PC-3 (cell line): ENCODE measurements at regions of chr4 and their contacts with region 1.

Region 1: DNA sequence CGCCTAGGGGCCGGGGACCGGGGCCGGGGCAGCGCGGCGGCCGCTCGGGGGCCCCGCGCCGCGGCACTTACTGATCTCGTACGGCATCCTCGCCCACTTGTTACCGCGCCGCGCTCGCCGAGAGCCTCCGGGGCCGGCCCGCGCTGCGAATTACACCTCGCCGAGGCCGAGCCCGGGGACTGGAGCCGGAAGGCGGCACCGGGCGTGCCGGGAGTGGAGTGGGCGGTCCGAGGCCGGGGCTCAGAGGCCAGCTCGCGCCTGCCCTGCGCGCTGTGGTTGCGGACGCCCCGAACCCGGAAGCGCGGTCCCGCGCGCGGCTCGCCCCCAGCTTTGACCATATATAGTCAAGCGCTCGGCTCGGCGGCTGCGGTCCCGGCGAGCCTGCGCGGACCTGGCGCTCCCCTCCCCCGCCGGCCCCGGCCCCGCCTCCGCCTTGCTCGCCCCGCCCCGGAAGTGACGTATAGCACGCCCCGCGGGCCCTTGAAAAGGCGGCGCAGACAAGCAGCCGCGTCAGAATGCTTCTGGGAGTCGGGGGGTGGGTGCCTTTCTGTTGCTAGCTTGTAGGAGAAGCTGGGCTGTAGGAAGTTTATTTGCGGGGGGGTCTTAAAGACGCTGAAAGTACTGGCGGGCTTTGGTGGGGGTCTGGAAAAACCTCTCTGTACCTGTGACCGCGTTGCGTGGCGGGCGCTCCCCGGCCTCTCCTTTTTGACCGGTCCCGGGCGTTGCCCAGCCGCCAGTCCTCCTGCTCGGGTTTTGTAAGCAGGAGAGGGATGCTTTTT is at the start of gene WDR1:
- DNase-seq: peak; percentile 87
- ATAC-seq: peak; percentile 95
- H3K4me3 ChIP-seq: peak within 1 kb of the TSS; percentile 80
- H3K27ac ChIP-seq: peak within 1 kb of the TSS; percentile 37
- H3K4me1 ChIP-seq: peaks cover 20% of the 10 kb centered on the region
- H3K27me3 ChIP-seq: no peaks in the 10 kb centered on the region
- CTCF ChIP-seq: no peak
- total RNA-seq, gene WDR1: 148 and 150 TPM in 2 replicates

Region 2: DNA sequence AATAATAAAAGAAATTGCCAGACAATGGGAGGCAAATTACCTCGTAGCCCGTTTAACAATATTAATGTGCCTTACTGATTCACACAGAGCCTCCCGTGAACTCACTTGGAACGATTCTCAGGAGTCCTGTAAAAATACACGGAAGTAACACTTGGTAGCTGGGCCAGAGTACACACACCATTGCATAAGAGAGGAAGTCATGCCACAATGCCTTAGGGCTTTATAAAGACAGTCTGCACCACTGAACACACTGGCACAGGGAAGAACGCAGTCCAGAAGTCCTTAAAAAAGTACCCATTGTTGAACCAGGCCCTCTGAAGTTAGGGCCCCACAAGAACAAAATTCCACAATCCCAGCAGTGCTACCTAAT is 110.6 kb before region 1 on chr4:
- CTCF ChIA-PET with region 1: no interaction called
- POLR2A ChIA-PET with region 1: interaction called, 4 read pairs
- intact Hi-C with region 1: loop called (anchors 2 kb)
- DNase-seq: peak; percentile 89
- ATAC-seq: peak; percentile 73
- H3K4me3 ChIP-seq: peak overlapping the region; percentile 53
- H3K27ac ChIP-seq: peak overlapping the region; percentile 100
- H3K4me1 ChIP-seq: peaks cover 43% of the 10 kb centered on the region
- H3K27me3 ChIP-seq: no peaks in the 10 kb centered on the region
- CTCF ChIP-seq: no peak

Region 3: DNA sequence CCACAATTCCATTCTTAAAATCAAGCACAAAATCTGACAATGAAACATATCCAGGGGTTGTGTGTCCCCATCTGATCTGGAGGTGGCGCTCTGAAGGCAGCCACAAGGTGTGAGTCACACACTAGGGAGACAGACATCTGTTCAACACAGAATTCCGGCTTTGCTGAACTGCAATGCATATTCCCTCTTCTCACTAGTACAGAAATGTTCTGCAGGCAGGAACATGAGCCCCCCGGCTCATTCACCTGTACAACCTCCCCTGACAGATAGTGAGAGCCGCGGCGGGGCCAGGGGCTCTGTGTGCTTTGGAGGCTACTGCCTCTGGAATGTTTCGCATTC is 42.0 kb before region 1 on chr4:
- CTCF ChIA-PET with region 1: no interaction called
- POLR2A ChIA-PET with region 1: interaction called, 5 read pairs
- intact Hi-C with region 1: loop called (anchors 5 kb)
- DNase-seq: peak; percentile 42
- ATAC-seq: no peak
- H3K4me3 ChIP-seq: no peak overlapping the region
- H3K27ac ChIP-seq: no peak overlapping the region
- H3K4me1 ChIP-seq: peaks cover 7% of the 10 kb centered on the region; the same call in 1 of the 2 replicates
- H3K27me3 ChIP-seq: no peaks in the 10 kb centered on the region
- CTCF ChIP-seq: peak; percentile 65

Region 4: GRCh38 chr4:10684631-10685030 is 567.9 kb after region 1 on chr4 and contains the start of gene CLNK:
- CTCF ChIA-PET with region 1: no interaction called
- POLR2A ChIA-PET with region 1: no interaction called
- intact Hi-C with region 1: no loop called
- DNase-seq: no peak
- ATAC-seq: no peak
- H3K4me3 ChIP-seq: no peak within 1 kb of the TSS
- H3K27ac ChIP-seq: no peak within 1 kb of the TSS
- H3K4me1 ChIP-seq: no peaks in the 10 kb centered on the region
- H3K27me3 ChIP-seq: no peaks in the 10 kb centered on the region
- CTCF ChIP-seq: no peak
- total RNA-seq, gene CLNK: not detected in 2 replicates